Vagina (tissue), 2 donors: ENCODE measurements at regions of chr18 and their contacts with region 1.

Region 1: GRCh38 chr18:8629602-8630001 is 20.4 kb downstream of the RAB12 start:
- DNase-seq: no peak
- H3K4me3 ChIP-seq: no peak overlapping the region
- H3K27ac ChIP-seq: no peak overlapping the region
- H3K4me1 ChIP-seq: no peaks in the 10 kb centered on the region
- H3K27me3 ChIP-seq: no peaks in the 10 kb centered on the region
- CTCF ChIP-seq: no peak
- POLR2A ChIP-seq: no peak

Region 2: DNA sequence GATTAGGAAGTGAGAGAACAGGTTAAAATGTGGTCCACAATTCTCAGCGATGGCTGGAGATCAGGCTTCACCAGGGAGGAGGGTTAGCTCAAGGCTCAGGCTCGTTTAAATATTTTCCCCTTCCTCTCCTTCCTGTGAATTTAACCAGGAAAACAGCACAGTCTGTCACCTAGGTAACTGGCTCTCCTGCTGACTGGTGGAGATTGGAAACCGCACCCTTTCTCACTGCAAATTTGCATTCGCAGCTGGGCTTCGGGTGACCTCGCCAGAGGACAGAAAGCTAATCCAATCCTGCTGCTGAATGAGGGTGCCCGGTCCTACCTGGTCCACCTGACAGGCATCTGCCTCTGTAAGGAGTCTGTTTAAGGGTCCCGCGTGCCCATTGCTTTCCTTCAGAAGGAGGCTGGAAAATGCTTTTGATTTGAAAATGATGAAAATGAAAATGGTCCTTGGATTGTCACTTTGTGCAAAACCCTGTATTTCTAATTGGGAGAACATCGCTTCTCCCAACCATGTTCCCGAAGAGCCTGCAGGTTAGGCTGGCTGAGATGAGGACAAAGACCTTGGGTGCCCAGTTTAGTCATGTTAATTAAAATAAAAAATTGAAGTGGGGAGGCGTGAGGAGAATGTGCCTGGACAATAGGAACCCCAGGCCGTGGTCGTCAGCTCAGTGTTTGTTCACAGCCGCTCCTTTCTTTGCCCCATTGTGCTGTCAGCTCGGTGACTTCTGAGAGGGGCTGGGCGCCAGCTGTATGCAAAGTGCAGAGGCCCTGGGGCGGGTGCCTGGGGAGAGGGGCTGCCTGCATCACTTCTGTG is 32.4 kb after region 1 on chr18:
- intact Hi-C with region 1: loop called (anchors 2 kb)
- DNase-seq: no peak
- H3K4me3 ChIP-seq: no peak overlapping the region
- H3K27ac ChIP-seq: no peak overlapping the region
- H3K4me1 ChIP-seq: peaks cover 6% of the 10 kb centered on the region
- H3K27me3 ChIP-seq: no peaks in the 10 kb centered on the region
- CTCF ChIP-seq: no peak
- POLR2A ChIP-seq: no peak